ENCODE measurements at regions of chr3 and their contacts with region 1.

Region 1: GRCh38 chr3:48464713-48465221 is 18.2 kb downstream of the ATRIP start:
- DNase-seq: peak in 1 of 4 donors; percentile 31
- ATAC-seq: no peak
- H3K4me3 ChIP-seq: no peak overlapping the region
- H3K27ac ChIP-seq: peak overlapping the region; percentile 93 to 100 (median 99)
- H3K4me1 ChIP-seq: peaks cover 45% of the 10 kb centered on the region
- H3K27me3 ChIP-seq: no peaks in the 10 kb centered on the region
- CTCF ChIP-seq: no peak
- POLR2A ChIP-seq: no peak

Region 2: DNA sequence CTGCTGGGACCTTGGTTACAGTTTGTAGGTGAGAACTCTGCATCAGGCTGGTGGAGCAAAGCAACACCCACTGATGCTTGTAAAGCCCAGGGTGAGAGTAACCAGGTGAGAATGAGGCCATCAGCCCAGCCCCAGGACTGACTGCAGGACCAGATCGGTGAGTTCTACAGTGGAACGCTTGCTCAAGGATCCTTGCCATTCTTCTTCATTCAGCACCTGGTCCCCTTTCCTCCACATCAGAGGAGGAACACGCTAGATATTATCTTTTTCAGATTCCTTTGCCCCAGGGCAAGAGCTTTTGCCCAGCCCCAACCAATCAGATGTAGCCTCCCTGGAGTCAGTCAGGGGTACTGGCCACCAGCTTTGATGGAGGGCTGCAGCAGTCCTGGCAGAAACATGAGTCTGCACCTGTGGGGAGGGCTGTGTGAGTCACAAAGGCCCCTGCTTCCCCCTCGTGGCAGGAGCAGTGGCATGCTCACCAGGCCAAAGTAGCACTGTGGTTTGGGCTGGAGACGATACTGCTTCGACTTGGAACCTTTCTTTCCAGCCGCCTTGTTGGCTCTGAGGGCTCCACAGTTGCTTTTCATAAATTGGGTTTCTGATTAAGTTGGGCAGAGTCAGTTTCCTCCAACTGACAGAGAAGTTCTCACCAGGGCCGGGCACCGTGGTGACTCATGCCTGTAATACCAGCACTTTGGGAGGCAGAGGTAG is 42.7 kb after region 1 on chr3:
- intact Hi-C with region 1: loop called (anchors 5 kb)
- DNase-seq: peak; percentile 57 to 77 (median 74)
- ATAC-seq: peak; percentile 23
- H3K4me3 ChIP-seq: no peak overlapping the region
- H3K27ac ChIP-seq: no peak overlapping the region
- H3K4me1 ChIP-seq: peaks cover 25% of the 10 kb centered on the region
- H3K27me3 ChIP-seq: no peaks in the 10 kb centered on the region
- CTCF ChIP-seq: peak in 6 of 7 experiments; percentile 23 to 67 (median 55)
- POLR2A ChIP-seq: no peak

Region 3: GRCh38 chr3:48548729-48549705 is 84.2 kb after region 1 on chr3:
- intact Hi-C with region 1: loop called (anchors 5 kb)
- DNase-seq: peak; percentile 81 to 86 (median 84)
- ATAC-seq: peak; percentile 69
- H3K4me3 ChIP-seq: no peak overlapping the region
- H3K27ac ChIP-seq: peak overlapping the region in 2 of 4 donors; percentile 26 to 93
- H3K4me1 ChIP-seq: peaks cover 45% of the 10 kb centered on the region
- H3K27me3 ChIP-seq: no peaks in the 10 kb centered on the region
- CTCF ChIP-seq: peak; percentile 80 to 91 (median 90)
- POLR2A ChIP-seq: no peak

Region 4: DNA sequence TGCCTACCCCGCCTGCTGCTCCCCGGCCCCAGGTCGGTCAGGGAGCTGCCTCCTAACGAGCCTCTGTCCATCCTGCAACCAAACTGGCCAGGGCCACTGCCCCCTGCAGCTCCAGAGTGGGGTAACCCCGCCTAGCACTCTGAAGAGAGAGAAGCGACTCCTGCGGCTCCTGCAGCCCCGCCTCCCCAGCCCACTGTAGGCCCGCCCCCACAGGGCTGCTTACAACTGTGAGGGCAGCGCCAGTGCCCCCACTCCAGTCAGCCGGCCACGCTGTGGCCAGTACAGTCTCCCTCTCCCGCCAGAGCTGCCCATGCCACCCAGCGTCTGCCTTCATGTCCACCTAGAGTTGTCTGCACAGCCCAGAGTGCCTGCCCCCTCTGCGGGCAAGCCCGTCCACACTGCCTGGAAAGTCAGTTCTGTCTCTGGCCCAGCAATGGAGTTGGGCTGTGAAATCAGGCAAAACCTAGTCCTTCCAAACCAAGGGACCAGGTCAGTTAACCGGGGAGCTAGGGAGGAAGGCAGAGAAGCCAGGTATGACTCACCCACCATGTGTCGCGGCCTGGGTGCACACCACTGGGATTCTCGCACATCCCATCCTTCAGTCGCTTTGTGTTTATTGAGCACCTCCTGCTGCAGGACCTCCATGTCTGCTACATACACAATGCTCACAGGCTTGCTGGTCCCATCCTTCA is 96.4 kb after region 1 on chr3:
- intact Hi-C with region 1: loop called (anchors 5 kb)
- DNase-seq: peak in 3 of 4 donors; percentile 43 to 60 (median 45)
- ATAC-seq: no peak
- H3K4me3 ChIP-seq: no peak overlapping the region
- H3K27ac ChIP-seq: peak overlapping the region in 1 of 4 donors; percentile 46
- H3K4me1 ChIP-seq: peaks cover 19% of the 10 kb centered on the region
- H3K27me3 ChIP-seq: no peaks in the 10 kb centered on the region
- CTCF ChIP-seq: peak in 1 of 7 experiments; percentile 26
- POLR2A ChIP-seq: peak in 1 of 3 donors; percentile 23